ENCODE measurements at regions of chr2 and their contacts with region 1.

Region 1: DNA sequence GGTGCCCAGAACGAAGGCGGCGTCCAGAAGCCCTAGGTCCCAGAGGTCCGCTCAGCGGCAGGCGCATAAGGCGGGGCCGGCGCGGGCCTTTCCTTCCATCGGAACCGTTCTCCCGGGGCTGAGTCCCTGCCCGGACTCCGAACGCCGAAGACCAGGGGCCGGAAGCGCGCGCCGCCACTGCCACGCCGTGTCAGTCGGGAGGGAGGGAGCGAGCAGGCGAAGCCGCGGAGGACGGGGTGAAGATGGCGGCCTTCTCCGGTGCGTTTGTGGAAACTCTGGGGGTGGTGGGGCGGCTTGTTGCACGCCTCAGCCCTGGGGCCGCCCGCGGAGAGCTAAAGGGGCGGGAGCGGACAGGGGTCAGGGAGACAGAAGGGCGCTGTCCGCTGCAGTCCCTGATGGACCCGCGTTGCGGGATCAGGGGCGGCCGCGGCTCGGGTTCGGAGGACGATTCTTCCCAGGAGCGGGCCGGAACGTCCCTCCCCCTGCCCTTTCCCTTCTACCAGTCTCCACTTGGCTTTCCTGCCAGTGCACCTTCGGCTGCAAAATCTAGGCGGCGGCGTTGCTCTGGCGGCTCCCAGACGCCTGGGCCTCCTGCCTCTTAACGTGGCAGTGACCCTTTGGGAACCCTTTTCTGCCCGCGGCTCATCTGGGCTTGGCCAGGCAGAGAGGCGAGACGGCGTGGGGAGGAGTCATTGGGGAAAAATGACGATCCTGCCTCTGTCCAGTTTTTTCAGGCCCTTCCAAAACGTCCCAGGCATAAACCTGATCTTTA is at the start of gene DDX1:
- DNase-seq: peak; percentile 94
- ATAC-seq: peak; percentile 96
- total RNA-seq, gene DDX1: 142 TPM

Region 2: GRCh38 chr2:15539999-15540398 is 51.9 kb before region 1 on chr2:
- intact Hi-C with region 1: loop called (anchors 5 kb)
- DNase-seq: no peak
- ATAC-seq: no peak

Measured in Right ventricle myocardium inferior (tissue), 1 donor.